Colonic mucosa (tissue), 4 donors: ENCODE measurements at regions of chr18 and their contacts with region 1.

Region 1: GRCh38 chr18:3062798-3063680 is 50.1 kb upstream of the LPIN2 start:
- DNase-seq: peak; percentile 82
- H3K4me3 ChIP-seq: no peak overlapping the region
- H3K27ac ChIP-seq: peak overlapping the region; percentile 48
- H3K4me1 ChIP-seq: no peaks in the 10 kb centered on the region
- H3K27me3 ChIP-seq: no peaks in the 10 kb centered on the region
- CTCF ChIP-seq: peak; percentile 70

Region 2: GRCh38 chr18:2948038-2948437 is 115.0 kb before region 1 on chr18:
- intact Hi-C with region 1: loop called (anchors 5 kb)
- DNase-seq: no peak
- H3K4me3 ChIP-seq: no peak overlapping the region
- H3K27ac ChIP-seq: no peak overlapping the region
- H3K4me1 ChIP-seq: no peaks in the 10 kb centered on the region
- H3K27me3 ChIP-seq: no peaks in the 10 kb centered on the region
- CTCF ChIP-seq: peak; percentile 25

Region 3: DNA sequence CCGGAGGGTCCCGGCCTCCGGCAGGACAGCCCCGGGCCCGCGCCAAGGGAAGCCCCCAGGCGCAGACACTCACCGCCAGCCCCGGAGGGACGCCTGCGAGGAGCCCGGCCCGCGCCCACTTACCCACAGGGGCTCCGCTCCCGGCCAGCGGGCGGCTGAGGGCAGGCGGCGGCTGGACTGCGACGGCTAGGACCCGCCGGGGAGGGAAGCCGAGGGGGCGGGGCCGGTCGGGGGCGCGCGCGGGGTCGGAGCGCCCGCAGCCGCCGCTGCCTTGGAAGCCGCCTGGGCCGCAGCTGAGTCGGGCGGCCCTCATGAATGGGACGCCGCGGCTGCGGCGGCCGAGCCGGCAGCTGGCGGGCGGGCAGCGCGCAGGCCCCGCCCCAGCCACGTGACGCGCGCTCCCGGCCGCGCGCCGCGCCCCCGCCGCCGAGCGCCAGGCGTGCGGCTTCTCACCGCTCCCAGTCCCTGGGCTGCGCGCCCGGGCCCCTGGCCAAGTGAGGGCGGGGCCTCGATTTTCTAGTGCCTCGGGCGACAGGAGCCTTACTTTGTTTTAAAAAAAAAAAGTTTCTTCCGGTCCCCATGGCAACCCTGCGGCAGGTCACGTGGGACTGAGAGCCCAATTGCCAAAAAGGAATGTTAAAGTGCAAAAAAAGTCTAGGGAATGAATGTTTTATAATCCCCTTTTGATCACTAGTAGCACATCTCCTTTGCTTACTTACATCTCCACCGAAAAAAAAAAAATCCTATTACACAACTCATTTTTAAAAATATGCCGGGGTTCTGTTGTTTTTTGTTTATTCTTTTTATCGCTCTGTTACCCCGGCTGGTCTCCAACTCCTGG is 49.9 kb before region 1 on chr18 and contains the start of gene LPIN2:
- intact Hi-C with region 1: loop called (anchors 5 kb)
- DNase-seq: peak; percentile 100
- H3K4me3 ChIP-seq: peak within 1 kb of the TSS; percentile 73
- H3K27ac ChIP-seq: peak within 1 kb of the TSS; percentile 94
- H3K4me1 ChIP-seq: no peaks in the 10 kb centered on the region
- H3K27me3 ChIP-seq: no peaks in the 10 kb centered on the region
- CTCF ChIP-seq: no peak
- total RNA-seq, gene LPIN2: 23.6 to 59.0 TPM